Prostate gland (tissue), 2 donors: ENCODE measurements at regions of chr20 and their contacts with region 1.

Region 1: GRCh38 chr20:9068851-9069663 is at the start of gene PLCB4:
- DNase-seq: peak; percentile 45
- H3K4me3 ChIP-seq: peak within 1 kb of the TSS; percentile 80 to 88
- H3K27ac ChIP-seq: peak within 1 kb of the TSS; percentile 78 to 81
- H3K4me1 ChIP-seq: no peaks in the 10 kb centered on the region
- H3K27me3 ChIP-seq: no peaks in the 10 kb centered on the region
- CTCF ChIP-seq: no peak
- POLR2A ChIP-seq: no peak
- total RNA-seq, gene PLCB4: 9.1 to 11.6 TPM

Region 2: DNA sequence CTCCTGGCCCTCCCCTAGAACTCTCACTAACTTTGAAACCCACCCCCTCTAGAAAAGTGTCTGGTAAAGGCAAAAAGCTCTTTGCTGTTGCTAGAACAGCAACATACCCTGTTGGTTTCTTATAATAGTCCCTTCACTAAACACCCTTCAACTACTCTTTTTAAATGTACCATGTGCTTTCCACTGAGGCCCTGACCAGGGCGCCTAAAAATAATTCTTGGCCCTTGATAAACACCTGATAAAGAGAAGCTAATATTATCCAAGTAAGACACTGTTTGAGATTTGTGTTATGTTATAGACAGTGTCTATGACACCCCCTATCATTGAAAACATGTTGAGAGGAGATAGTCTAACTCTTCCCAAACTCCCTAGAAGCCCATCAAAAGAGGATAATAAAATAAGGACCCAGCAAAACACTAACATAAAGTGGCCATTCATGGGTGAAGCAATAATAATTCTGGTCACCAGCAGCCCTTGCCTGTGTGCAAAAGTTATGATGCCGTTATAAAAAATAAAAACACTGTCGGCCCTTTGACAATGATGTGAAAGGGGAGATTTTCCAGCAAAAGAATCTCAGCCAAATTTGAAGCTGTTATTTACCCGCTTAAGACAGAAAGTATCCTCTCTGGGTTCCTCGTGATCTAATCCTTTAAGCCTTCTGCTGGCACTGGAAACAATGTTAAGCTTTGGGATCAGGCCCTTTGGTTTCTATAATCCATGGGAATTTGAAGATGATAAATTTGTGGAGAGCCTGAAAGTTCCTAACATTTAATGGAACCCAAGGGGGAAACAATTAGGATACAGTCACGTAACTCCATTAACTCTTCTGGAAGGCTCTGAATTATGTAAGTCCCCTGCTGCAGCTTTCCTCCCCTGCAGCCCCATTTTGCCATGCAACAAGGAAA is 122.8 kb before region 1 on chr20:
- intact Hi-C with region 1: loop called (anchors 5 kb)
- DNase-seq: no peak
- H3K4me3 ChIP-seq: no peak overlapping the region
- H3K27ac ChIP-seq: no peak overlapping the region
- H3K4me1 ChIP-seq: no peaks in the 10 kb centered on the region
- H3K27me3 ChIP-seq: no peaks in the 10 kb centered on the region
- CTCF ChIP-seq: no peak
- POLR2A ChIP-seq: no peak